Ascending aorta (tissue), 2 donors: ENCODE measurements at regions of chr3 and their contacts with region 1.

Region 1: GRCh38 chr3:124409789-124410261 is 320.4 kb upstream of the UMPS start:
- DNase-seq: no peak
- H3K4me3 ChIP-seq: no peak overlapping the region
- H3K27ac ChIP-seq: peak overlapping the region; percentile 45 to 69
- H3K4me1 ChIP-seq: peaks cover 0 to 7% of the 10 kb centered on the region in 2 donors
- H3K27me3 ChIP-seq: no peaks in the 10 kb centered on the region
- CTCF ChIP-seq: no peak

Region 2: GRCh38 chr3:124383083-124383482 is 26.7 kb before region 1 on chr3:
- intact Hi-C with region 1: loop called (anchors 2 kb)
- DNase-seq: no peak
- H3K4me3 ChIP-seq: no peak overlapping the region
- H3K27ac ChIP-seq: peak overlapping the region; percentile 20 to 52
- H3K4me1 ChIP-seq: peaks cover 0 to 26% of the 10 kb centered on the region in 2 donors
- H3K27me3 ChIP-seq: no peaks in the 10 kb centered on the region
- CTCF ChIP-seq: no peak